Panc1 (cell line): ENCODE measurements at regions of chr7 and their contacts with region 1.

Region 1: GRCh38 chr7:158827411-158828132 is 1.7 kb downstream of the ESYT2 start:
- DNase-seq: no peak
- ATAC-seq: no peak
- H3K4me3 ChIP-seq: peak overlapping the region; percentile 87 to 88
- H3K27ac ChIP-seq: peak overlapping the region; percentile 82
- H3K4me1 ChIP-seq: peaks cover 34% of the 10 kb centered on the region
- H3K27me3 ChIP-seq: no peaks in the 10 kb centered on the region
- CTCF ChIP-seq: no peak

Region 2: DNA sequence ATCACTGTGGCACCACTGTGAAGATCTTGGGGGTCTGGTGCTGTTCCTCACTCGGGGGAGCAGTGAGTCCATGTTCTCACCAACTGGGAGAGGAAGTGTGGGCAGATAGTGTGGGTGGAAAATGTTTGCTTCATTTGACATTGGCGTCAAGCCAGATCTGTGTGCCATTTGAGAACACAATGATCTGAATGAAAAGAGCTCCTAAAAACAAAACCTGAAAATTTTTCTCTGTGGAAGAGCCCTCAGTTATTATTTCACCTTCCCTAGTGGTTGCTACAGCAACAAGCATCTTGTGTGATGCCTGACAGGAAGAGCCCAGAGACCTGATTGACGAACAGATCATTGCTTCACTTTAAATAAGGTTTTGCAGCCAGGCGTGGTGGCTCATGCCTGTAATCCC is 191.6 kb after region 1 on chr7:
- CTCF ChIA-PET with region 1: no interaction called
- POLR2A ChIA-PET with region 1: interaction called, 10 read pairs
- in situ Hi-C with region 1: no loop called
- intact Hi-C with region 1: no loop called
- DNase-seq: no peak
- ATAC-seq: no peak
- H3K4me3 ChIP-seq: no peak overlapping the region
- H3K27ac ChIP-seq: no peak overlapping the region; the same call in 1 of the 2 replicates
- H3K4me1 ChIP-seq: peaks cover 32% of the 10 kb centered on the region
- H3K27me3 ChIP-seq: no peaks in the 10 kb centered on the region
- CTCF ChIP-seq: no peak